Endothelial cell of umbilical vein (primary cell): ENCODE measurements at regions of chr12 and their contacts with region 1.

Region 1: DNA sequence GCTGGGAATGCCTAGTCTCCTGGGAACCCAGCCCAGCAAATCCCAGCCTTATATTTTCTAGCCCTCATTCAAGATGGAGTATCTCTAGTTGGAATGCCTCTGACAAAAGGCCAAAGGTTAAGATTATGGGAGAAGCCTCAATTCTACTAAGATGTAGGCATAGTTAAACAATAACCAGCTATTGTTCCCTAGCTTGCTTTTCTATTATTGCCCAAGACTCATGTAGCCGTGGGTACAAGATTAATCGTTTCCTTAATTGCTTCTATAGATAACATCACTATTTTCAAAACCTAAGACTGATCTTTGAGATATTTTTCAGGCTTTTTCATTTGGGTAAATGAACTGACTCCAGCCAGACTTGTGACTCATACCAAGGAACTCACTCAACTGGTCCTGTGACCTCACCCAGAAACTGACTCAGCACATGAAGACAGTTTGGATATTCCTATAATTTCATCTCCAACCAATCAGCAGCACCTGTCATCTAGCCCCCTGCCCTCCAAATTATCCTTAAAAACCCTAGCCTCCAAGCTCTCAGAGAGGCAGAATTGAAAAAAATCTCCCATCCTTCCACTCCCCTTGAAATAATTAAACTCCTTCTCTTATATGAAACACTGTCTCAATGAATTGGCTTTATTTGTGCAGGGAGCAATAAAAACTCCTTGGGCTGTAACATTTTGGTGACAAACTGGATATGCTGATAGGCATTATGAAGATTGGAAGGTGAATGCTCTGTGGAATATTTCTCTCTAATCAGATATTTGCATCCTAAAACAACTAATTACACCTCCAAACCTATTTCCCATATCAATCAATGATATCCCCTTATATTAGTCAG is 589.0 kb downstream of the C12orf50 start:
- DNase-seq: peak; percentile 75
- H3K4me3 ChIP-seq: no peak overlapping the region
- H3K27ac ChIP-seq: no peak overlapping the region
- H3K4me1 ChIP-seq: peaks cover 11% of the 10 kb centered on the region
- H3K27me3 ChIP-seq: peaks cover 0 to 3% of the 10 kb centered on the region in 2 experiments
- CTCF ChIP-seq: no peak
- POLR2A ChIP-seq: no peak

Region 2: DNA sequence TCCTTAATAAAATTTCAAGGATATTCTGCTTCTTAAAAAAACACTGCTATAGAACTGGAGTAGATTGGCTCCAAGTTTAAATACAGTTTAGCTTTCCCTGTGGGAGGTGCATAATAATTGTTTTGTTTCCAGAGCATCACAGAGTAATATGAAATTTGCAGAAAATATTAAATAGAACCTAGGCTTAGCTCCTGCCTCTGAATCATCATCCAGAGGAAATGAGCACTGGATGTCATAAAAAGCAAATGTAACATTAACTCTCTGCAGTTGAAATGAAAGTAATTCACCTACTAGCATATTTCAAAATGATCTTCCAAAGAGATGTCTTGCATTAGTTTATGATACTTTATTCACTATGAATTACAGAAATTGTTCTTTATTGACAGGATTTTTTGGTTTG is 180.8 kb before region 1 on chr12:
- CTCF ChIA-PET with region 1: no interaction called
- POLR2A ChIA-PET with region 1: no interaction called
- dilution Hi-C with region 1: no loop called
- intact Hi-C with region 1: no loop called
- DNase-seq: peak; percentile 38
- H3K4me3 ChIP-seq: no peak overlapping the region
- H3K27ac ChIP-seq: no peak overlapping the region
- H3K4me1 ChIP-seq: no peaks in the 10 kb centered on the region
- H3K27me3 ChIP-seq: no peaks in the 10 kb centered on the region
- CTCF ChIP-seq: no peak
- POLR2A ChIP-seq: no peak

Region 3: DNA sequence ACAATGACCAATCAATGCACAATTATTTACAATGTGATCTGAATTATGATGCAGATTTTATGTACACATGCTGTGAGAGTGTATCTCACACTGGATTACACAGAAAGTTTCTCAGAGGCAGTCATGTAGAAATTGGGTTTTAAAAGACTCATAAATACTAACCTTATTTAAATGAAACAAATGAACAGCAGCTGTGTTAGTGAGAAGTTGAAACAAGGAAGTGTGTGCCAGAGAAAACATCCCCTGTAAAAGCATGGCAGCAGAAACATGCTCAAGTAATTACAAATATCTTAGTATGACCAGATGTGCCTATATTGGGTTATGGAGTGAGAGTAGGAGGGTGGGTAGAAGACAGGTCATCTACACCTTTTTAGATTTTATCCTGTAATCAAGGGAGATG is 134.7 kb before region 1 on chr12:
- CTCF ChIA-PET with region 1: no interaction called
- POLR2A ChIA-PET with region 1: no interaction called
- dilution Hi-C with region 1: no loop called
- intact Hi-C with region 1: no loop called
- DNase-seq: peak; percentile 14
- H3K4me3 ChIP-seq: no peak overlapping the region
- H3K27ac ChIP-seq: no peak overlapping the region
- H3K4me1 ChIP-seq: no peaks in the 10 kb centered on the region
- H3K27me3 ChIP-seq: no peaks in the 10 kb centered on the region
- CTCF ChIP-seq: no peak
- POLR2A ChIP-seq: no peak

Region 4: GRCh38 chr12:87332987-87333726 is 107.1 kb before region 1 on chr12:
- CTCF ChIA-PET with region 1: no interaction called
- POLR2A ChIA-PET with region 1: no interaction called
- dilution Hi-C with region 1: no loop called
- intact Hi-C with region 1: loop called (anchors 5 kb)
- DNase-seq: peak; percentile 59
- H3K4me3 ChIP-seq: peak overlapping the region in 1 of 3 experiments; percentile 22
- H3K27ac ChIP-seq: peak overlapping the region; percentile 32
- H3K4me1 ChIP-seq: peaks cover 27% of the 10 kb centered on the region
- H3K27me3 ChIP-seq: peaks cover 0 to 2% of the 10 kb centered on the region in 2 experiments
- CTCF ChIP-seq: no peak
- POLR2A ChIP-seq: peak; percentile 23

Region 5: GRCh38 chr12:87509237-87509820 is 69.1 kb after region 1 on chr12:
- CTCF ChIA-PET with region 1: no interaction called
- POLR2A ChIA-PET with region 1: no interaction called
- dilution Hi-C with region 1: no loop called
- intact Hi-C with region 1: no loop called
- DNase-seq: peak; percentile 5
- H3K4me3 ChIP-seq: no peak overlapping the region
- H3K27ac ChIP-seq: no peak overlapping the region
- H3K4me1 ChIP-seq: no peaks in the 10 kb centered on the region
- H3K27me3 ChIP-seq: no peaks in the 10 kb centered on the region
- CTCF ChIP-seq: no peak
- POLR2A ChIP-seq: no peak

Region 6: GRCh38 chr12:87827638-87828264 is 387.5 kb after region 1 on chr12:
- CTCF ChIA-PET with region 1: no interaction called
- POLR2A ChIA-PET with region 1: no interaction called
- dilution Hi-C with region 1: no loop called
- intact Hi-C with region 1: loop called (anchors 10 kb)
- DNase-seq: peak; percentile 89
- H3K4me3 ChIP-seq: peak overlapping the region in 1 of 3 experiments; percentile 18
- H3K27ac ChIP-seq: peak overlapping the region; percentile 83
- H3K4me1 ChIP-seq: peaks cover 25% of the 10 kb centered on the region
- H3K27me3 ChIP-seq: no peaks in the 10 kb centered on the region
- CTCF ChIP-seq: no peak
- POLR2A ChIP-seq: no peak